Right ventricle myocardium inferior (tissue), 1 donor: ENCODE measurements at regions of chr16 and their contacts with region 1.

Region 1: GRCh38 chr16:24253192-24253591 is 2.9 kb upstream of the CACNG3 start:
- DNase-seq: no peak
- ATAC-seq: no peak

Region 2: GRCh38 chr16:24041826-24042631 is 211.2 kb before region 1 on chr16:
- intact Hi-C with region 1: loop called (anchors 1 kb)
- DNase-seq: no peak
- ATAC-seq: peak; percentile 54

Region 3: GRCh38 chr16:24070851-24071250 is 182.3 kb before region 1 on chr16:
- intact Hi-C with region 1: loop called (anchors 2 kb)
- DNase-seq: no peak
- ATAC-seq: peak; percentile 59

Region 4: GRCh38 chr16:24228514-24228913 is 24.7 kb before region 1 on chr16:
- intact Hi-C with region 1: no loop called
- DNase-seq: no peak
- ATAC-seq: no peak

Region 5: GRCh38 chr16:24504472-24505345 is 251.5 kb after region 1 on chr16:
- intact Hi-C with region 1: loop called (anchors 2 kb)
- DNase-seq: no peak
- ATAC-seq: peak; percentile 69